Activated CD4-positive, alpha-beta T cell treated with anti-CD3 and anti-CD28 coated beads for 36 hours (primary cell): ENCODE measurements at regions of chr13 and their contacts with region 1.

Region 1: DNA sequence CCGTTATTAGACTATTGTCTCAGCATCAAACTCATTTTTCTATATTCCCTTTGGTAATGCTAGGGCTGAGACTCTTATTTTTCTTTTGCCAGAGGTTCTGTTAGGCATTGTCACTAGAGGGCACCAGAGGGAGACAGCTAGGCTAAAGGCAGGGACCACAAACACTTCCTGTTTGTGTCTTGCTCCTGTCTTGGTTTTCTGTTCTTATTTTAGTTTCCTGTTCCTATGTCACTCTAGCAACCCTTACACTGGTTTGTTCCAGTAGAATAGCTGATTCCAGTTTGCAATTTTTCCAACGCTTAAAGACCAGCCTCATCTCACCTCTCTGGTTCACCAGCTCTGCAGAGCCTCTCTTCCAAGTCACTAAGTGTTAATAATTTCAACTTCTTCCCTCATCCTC is 772.0 kb downstream of the DIAPH3 start:
- DNase-seq: peak; percentile 68
- ATAC-seq: peak; percentile 96
- H3K4me3 Mint-ChIP-seq: no peak overlapping the region
- H3K27ac Mint-ChIP-seq: no peak overlapping the region
- H3K4me1 Mint-ChIP-seq: no peaks in the 10 kb centered on the region
- H3K27me3 Mint-ChIP-seq: peaks cover 2% of the 10 kb centered on the region

Region 2: GRCh38 chr13:59531571-59532091 is 139.9 kb after region 1 on chr13:
- CTCF ChIA-PET with region 1: no interaction called
- POLR2A ChIA-PET with region 1: no interaction called
- intact Hi-C with region 1: no loop called
- DNase-seq: peak; percentile 25
- ATAC-seq: peak; percentile 66
- H3K4me3 Mint-ChIP-seq: no peak overlapping the region
- H3K27ac Mint-ChIP-seq: no peak overlapping the region
- H3K4me1 Mint-ChIP-seq: peaks cover 14% of the 10 kb centered on the region
- H3K27me3 Mint-ChIP-seq: no peaks in the 10 kb centered on the region

Region 3: DNA sequence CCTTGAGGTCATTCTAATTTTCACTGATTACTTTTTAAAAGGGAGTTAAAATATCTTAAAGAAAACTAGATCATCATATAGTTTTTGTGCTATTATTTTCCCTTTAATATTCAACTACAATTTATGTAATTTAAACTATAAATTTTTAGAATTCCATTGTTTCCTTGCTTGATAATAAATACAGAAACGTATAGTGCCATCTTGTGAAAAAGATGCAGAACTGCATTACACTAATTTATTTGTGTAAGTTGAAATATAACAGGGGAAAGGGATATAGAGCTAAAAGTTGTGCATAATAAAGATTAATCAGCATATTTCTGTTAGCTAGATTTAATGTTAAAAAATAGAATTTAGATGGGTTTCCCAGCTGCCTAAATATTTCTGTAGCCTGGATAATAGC is 943.8 kb after region 1 on chr13:
- CTCF ChIA-PET with region 1: interaction called, 3 read pairs
- POLR2A ChIA-PET with region 1: no interaction called
- intact Hi-C with region 1: loop called (anchors 2 to 5 kb)
- DNase-seq: no peak
- ATAC-seq: no peak
- H3K4me3 Mint-ChIP-seq: no peak overlapping the region
- H3K27ac Mint-ChIP-seq: no peak overlapping the region
- H3K4me1 Mint-ChIP-seq: no peaks in the 10 kb centered on the region
- H3K27me3 Mint-ChIP-seq: peaks cover 4% of the 10 kb centered on the region